ENCODE measurements at regions of chr7 and their contacts with region 1.

Region 1: GRCh38 chr7:123557398-123558288 is at the start of gene NDUFA5:
- DNase-seq: peak; percentile 97
- H3K4me3 Mint-ChIP-seq: no peak within 1 kb of the TSS
- H3K27ac Mint-ChIP-seq: no peak within 1 kb of the TSS
- H3K4me1 Mint-ChIP-seq: peaks cover 15% of the 10 kb centered on the region
- H3K27me3 Mint-ChIP-seq: no peaks in the 10 kb centered on the region
- total RNA-seq, gene NDUFA5: 57.8 to 61.0 TPM

Region 2: GRCh38 chr7:123494193-123494796 is 63.3 kb before region 1 on chr7:
- CTCF ChIA-PET with region 1: interaction called, 13 read pairs
- POLR2A ChIA-PET with region 1: no interaction called
- intact Hi-C with region 1: no loop called
- DNase-seq: peak; percentile 14
- H3K4me3 Mint-ChIP-seq: no peak overlapping the region
- H3K27ac Mint-ChIP-seq: no peak overlapping the region
- H3K4me1 Mint-ChIP-seq: no peaks in the 10 kb centered on the region
- H3K27me3 Mint-ChIP-seq: peaks cover 11% of the 10 kb centered on the region

Region 3: GRCh38 chr7:123534383-123535260 is 23.0 kb before region 1 on chr7 and contains the start of gene IQUB:
- CTCF ChIA-PET with region 1: interaction called, 3 read pairs
- POLR2A ChIA-PET with region 1: interaction called, 4 read pairs
- intact Hi-C with region 1: loop called (anchors 1 kb)
- DNase-seq: peak; percentile 98
- H3K4me3 Mint-ChIP-seq: peak within 1 kb of the TSS; percentile 78
- H3K27ac Mint-ChIP-seq: peak within 1 kb of the TSS; percentile 72
- H3K4me1 Mint-ChIP-seq: peaks cover 29% of the 10 kb centered on the region
- H3K27me3 Mint-ChIP-seq: peaks cover 20% of the 10 kb centered on the region
- total RNA-seq, gene IQUB: 0.10 TPM in 1 of 2 experiments, not detected in the other

Region 4: DNA sequence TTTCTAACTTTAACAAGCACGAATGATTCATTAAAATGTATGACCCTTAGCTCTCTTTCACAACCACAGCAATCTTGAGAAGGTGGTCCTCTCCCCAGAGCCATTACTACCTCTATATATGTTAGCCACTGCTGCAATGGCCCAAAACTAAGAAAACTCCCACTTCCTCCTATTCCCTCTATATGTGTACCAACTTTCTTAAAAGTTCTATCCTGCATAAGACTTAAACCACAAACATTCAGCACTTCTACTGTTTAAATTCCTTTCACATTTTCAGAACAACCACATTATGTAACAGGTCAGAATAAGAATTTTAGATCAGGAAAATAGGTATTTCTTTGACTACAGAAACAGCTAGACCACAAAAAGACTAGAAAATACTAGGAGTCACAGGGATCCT is 155.0 kb after region 1 on chr7:
- CTCF ChIA-PET with region 1: no interaction called
- POLR2A ChIA-PET with region 1: no interaction called
- intact Hi-C with region 1: loop called (anchors 5 kb)
- DNase-seq: no peak
- H3K4me3 Mint-ChIP-seq: no peak overlapping the region
- H3K27ac Mint-ChIP-seq: no peak overlapping the region
- H3K4me1 Mint-ChIP-seq: peaks cover 58% of the 10 kb centered on the region
- H3K27me3 Mint-ChIP-seq: no peaks in the 10 kb centered on the region

Region 5: DNA sequence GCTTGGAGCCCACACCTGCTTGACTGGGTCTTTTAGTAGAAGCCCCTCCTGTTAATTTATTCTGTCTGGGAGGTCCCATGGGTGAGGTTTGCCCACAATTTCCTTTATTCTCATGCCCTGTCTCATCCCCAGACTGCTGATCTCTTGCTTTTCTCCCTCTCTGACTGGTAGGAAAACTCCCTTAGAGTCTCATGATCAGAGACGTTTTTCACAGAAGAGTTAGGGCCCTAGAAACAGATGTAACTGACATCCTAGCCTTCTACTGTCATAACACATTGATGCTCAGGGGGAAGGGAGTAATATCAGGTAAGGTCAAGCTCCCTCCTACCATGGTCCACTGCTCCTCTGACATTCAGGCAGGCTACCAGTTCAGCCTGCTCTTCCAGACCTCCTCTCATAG is 234.9 kb after region 1 on chr7:
- CTCF ChIA-PET with region 1: no interaction called
- POLR2A ChIA-PET with region 1: no interaction called
- intact Hi-C with region 1: no loop called
- DNase-seq: no peak
- H3K4me3 Mint-ChIP-seq: no peak overlapping the region
- H3K27ac Mint-ChIP-seq: no peak overlapping the region
- H3K4me1 Mint-ChIP-seq: peaks cover 4% of the 10 kb centered on the region
- H3K27me3 Mint-ChIP-seq: peaks cover 4% of the 10 kb centered on the region

Region 6: DNA sequence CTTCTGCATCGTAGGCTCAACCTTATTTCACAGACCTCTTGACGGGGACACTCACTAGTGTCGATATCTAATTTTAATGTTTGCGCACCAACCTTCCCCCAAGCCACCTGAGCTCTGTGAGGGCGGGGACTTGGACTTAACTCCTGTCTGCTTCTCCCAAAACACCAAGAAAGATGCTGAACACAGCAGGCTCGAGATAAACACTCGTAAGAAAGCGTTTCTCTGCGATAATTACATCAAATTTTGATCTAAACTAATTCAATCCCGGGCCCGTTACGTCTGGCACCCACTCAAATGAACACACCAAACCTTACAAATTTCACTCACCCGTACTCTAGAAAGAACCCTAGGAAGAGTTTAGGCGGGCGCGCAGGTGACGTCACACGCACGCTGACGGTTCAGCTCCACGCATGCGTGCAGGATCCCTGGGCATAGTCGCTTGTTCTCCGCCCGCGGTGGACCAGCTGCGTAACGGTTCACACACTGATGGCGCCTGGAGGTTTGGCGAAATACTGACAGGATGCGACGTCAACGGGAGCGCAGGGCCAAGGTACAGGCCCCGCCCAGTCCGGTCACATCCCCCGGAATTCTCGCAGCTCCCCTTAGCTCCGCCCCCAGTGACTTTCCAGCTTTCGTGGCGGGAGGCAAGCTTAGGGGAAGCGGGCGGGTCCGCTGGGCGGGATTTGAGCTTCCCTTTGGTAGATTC is 1372.0 kb after region 1 on chr7 and contains the start of gene POT1:
- CTCF ChIA-PET with region 1: no interaction called
- POLR2A ChIA-PET with region 1: no interaction called
- intact Hi-C with region 1: loop called (anchors 10 kb)
- DNase-seq: peak; percentile 99
- H3K4me3 Mint-ChIP-seq: peak within 1 kb of the TSS; percentile 89
- H3K27ac Mint-ChIP-seq: peak within 1 kb of the TSS; percentile 89
- H3K4me1 Mint-ChIP-seq: peaks cover 48% of the 10 kb centered on the region
- H3K27me3 Mint-ChIP-seq: no peaks in the 10 kb centered on the region
- total RNA-seq, gene POT1: 32.7 to 32.8 TPM

Measured in activated CD4-positive, alpha-beta memory T cell treated with anti-CD3 and anti-CD28 coated beads for 36 hours (primary cell).